ENCODE measurements at regions of chr17 and their contacts with region 1.

Region 1: GRCh38 chr17:75182569-75183450 is at the start of gene SUMO2:
- DNase-seq: peak; percentile 96
- H3K4me3 Mint-ChIP-seq: peak within 1 kb of the TSS; percentile 82
- H3K27ac Mint-ChIP-seq: peak within 1 kb of the TSS; percentile 99
- H3K4me1 Mint-ChIP-seq: peaks cover 45% of the 10 kb centered on the region
- H3K27me3 Mint-ChIP-seq: no peaks in the 10 kb centered on the region
- total RNA-seq, gene SUMO2: 548 to 559 TPM

Region 2: DNA sequence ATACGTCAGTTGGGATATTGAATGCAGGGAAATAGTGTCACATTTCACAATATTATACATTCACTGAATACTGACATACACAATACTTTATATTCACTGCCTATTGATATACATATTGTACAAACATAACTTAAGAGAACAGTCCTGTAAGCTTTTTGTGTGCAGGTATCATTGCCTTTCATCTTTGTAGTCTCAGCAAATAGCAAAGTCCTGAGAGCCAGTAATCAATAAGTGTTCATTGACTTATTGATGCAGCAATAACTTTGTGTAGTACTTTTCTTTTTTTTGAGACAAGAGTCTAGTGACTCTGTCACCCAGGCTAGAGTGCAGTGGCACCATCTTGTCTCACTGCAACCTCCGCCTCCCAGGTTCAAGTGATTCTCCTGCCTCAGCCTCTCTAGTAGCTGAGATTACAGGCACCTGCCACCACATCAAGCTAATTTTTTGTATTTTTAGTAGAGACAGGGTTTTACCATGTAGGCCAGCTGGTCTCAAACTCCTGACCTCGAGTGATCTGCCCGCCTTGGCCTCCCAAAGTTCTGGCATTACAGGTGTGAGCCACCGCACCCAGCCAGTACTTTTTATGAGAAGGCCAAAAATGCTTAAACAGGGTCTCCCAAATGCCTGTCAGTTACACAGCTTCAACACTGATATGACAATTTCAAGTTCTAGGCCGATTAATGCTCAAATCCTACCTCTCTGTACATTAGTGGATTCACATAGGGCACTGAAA is 17.2 kb after region 1 on chr17:
- CTCF ChIA-PET with region 1: interaction called, 80 read pairs
- POLR2A ChIA-PET with region 1: interaction called, 23 read pairs
- DNase-seq: no peak
- H3K4me3 Mint-ChIP-seq: no peak overlapping the region
- H3K27ac Mint-ChIP-seq: no peak overlapping the region
- H3K4me1 Mint-ChIP-seq: peaks cover 13% of the 10 kb centered on the region
- H3K27me3 Mint-ChIP-seq: peaks cover 1% of the 10 kb centered on the region

Region 3: DNA sequence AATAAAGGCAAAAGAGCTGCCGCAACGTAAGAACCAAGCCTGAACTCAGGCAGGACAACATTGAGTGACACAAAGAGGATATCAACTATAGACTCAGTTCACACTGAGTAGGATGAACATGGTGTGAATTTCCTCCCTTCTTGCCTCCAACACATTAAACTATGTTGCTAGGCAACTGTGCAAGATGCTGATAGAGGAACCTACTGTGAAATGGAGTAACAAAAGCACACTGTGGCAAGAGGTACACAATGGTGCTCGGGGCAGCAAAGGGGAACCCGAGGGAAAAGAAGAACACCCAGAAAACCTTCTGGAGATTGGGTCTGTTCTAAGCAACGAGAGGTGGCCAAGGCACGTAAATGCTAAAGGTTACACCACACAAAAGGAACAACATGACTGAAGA is 188.5 kb after region 1 on chr17:
- CTCF ChIA-PET with region 1: no interaction called
- POLR2A ChIA-PET with region 1: no interaction called
- DNase-seq: no peak
- H3K4me3 Mint-ChIP-seq: no peak overlapping the region
- H3K27ac Mint-ChIP-seq: peak overlapping the region; percentile 41
- H3K4me1 Mint-ChIP-seq: peaks cover 55% of the 10 kb centered on the region
- H3K27me3 Mint-ChIP-seq: no peaks in the 10 kb centered on the region

Measured in activated CD4-positive, alpha-beta memory T cell treated with anti-CD3 and anti-CD28 coated beads, Interleukin-2, amount 10 ng/mL, durations not matched to agents 7 days and 5 days (primary cell).